ENCODE measurements at regions of chr5 and their contacts with region 1.

Region 1: GRCh38 chr5:134738133-134738962 is at the start of gene CAMLG:
- DNase-seq: peak; percentile 99
- H3K4me3 ChIP-seq: peak within 1 kb of the TSS; percentile 27 to 71 (median 67)
- H3K27ac ChIP-seq: peak within 1 kb of the TSS; percentile 64
- H3K4me1 ChIP-seq: peaks cover 9% of the 10 kb centered on the region
- H3K27me3 ChIP-seq: no peaks in the 10 kb centered on the region
- CTCF ChIP-seq: peak; percentile 65 to 73
- POLR2A ChIP-seq: peak; percentile 90
- total RNA-seq, gene CAMLG: 32.9 and 33.3 TPM in 2 replicates

Region 2: GRCh38 chr5:134365604-134366003 is 372.7 kb before region 1 on chr5:
- CTCF ChIA-PET with region 1: no interaction called
- POLR2A ChIA-PET with region 1: no interaction called
- dilution Hi-C with region 1: no loop called
- intact Hi-C with region 1: loop called (anchors 5 kb)
- DNase-seq: no peak
- H3K4me3 ChIP-seq: no peak overlapping the region
- H3K27ac ChIP-seq: no peak overlapping the region
- H3K4me1 ChIP-seq: peaks cover 8% of the 10 kb centered on the region
- H3K27me3 ChIP-seq: no peaks in the 10 kb centered on the region
- CTCF ChIP-seq: no peak
- POLR2A ChIP-seq: no peak

Region 3: DNA sequence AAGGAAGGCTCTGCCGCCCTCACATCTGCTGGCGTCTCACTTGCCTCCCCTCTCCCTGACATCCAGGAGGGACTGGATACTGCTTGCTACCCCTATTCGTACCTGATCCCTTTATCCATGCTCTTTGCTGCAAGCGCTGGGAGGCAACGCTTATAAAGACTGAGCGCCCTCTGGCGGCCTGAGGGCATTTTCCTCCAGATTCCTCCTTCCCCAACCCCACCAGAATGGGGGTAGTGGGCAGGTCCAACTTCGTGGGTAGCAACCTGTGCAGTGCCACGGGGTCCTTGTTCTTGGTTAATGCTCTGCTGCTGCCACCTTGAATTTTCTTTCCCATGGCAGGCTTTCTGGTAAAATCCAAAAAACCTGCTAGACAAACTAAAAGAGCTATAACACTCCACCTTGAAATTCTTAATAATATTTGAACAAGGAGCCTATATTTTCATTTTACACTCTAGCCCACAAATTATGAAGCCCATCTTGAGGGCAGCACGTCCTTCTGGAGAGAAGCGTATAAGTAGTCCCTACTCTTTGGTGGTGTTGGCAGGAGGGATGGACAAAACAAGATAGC is 160.5 kb before region 1 on chr5:
- CTCF ChIA-PET with region 1: no interaction called
- POLR2A ChIA-PET with region 1: no interaction called
- dilution Hi-C with region 1: no loop called
- intact Hi-C with region 1: no loop called
- DNase-seq: peak; percentile 80
- H3K4me3 ChIP-seq: no peak overlapping the region
- H3K27ac ChIP-seq: peak overlapping the region; percentile 67
- H3K4me1 ChIP-seq: peaks cover 37% of the 10 kb centered on the region
- H3K27me3 ChIP-seq: no peaks in the 10 kb centered on the region
- CTCF ChIP-seq: peak; percentile 83 to 88
- POLR2A ChIP-seq: no peak

Region 4: GRCh38 chr5:134758504-134759341 is 20.4 kb after region 1 on chr5 and contains the start of gene DDX46:
- CTCF ChIA-PET with region 1: interaction called, 37 read pairs
- POLR2A ChIA-PET with region 1: interaction called, 10 read pairs
- dilution Hi-C with region 1: no loop called
- intact Hi-C with region 1: loop called (anchors 1 kb)
- DNase-seq: peak; percentile 95
- H3K4me3 ChIP-seq: peak within 1 kb of the TSS; percentile 54 to 87 (median 76)
- H3K27ac ChIP-seq: peak within 1 kb of the TSS; percentile 45
- H3K4me1 ChIP-seq: peaks cover 15% of the 10 kb centered on the region
- H3K27me3 ChIP-seq: no peaks in the 10 kb centered on the region
- CTCF ChIP-seq: peak; percentile 84 to 89
- POLR2A ChIP-seq: peak; percentile 94
- total RNA-seq, gene DDX46: 58.0 and 65.2 TPM in 2 replicates

Region 5: GRCh38 chr5:134873987-134874830 is 135.9 kb after region 1 on chr5 and contains the start of gene TXNDC15:
- CTCF ChIA-PET with region 1: no interaction called
- POLR2A ChIA-PET with region 1: no interaction called
- dilution Hi-C with region 1: no loop called
- intact Hi-C with region 1: loop called (anchors 1 kb)
- DNase-seq: peak; percentile 89
- H3K4me3 ChIP-seq: peak within 1 kb of the TSS; percentile 54 to 95 (median 80)
- H3K27ac ChIP-seq: peak within 1 kb of the TSS; percentile 60
- H3K4me1 ChIP-seq: peaks cover 3% of the 10 kb centered on the region
- H3K27me3 ChIP-seq: no peaks in the 10 kb centered on the region
- CTCF ChIP-seq: no peak
- POLR2A ChIP-seq: peak; percentile 89
- total RNA-seq, gene TXNDC15: 49.7 and 68.6 TPM in 2 replicates

Region 6: DNA sequence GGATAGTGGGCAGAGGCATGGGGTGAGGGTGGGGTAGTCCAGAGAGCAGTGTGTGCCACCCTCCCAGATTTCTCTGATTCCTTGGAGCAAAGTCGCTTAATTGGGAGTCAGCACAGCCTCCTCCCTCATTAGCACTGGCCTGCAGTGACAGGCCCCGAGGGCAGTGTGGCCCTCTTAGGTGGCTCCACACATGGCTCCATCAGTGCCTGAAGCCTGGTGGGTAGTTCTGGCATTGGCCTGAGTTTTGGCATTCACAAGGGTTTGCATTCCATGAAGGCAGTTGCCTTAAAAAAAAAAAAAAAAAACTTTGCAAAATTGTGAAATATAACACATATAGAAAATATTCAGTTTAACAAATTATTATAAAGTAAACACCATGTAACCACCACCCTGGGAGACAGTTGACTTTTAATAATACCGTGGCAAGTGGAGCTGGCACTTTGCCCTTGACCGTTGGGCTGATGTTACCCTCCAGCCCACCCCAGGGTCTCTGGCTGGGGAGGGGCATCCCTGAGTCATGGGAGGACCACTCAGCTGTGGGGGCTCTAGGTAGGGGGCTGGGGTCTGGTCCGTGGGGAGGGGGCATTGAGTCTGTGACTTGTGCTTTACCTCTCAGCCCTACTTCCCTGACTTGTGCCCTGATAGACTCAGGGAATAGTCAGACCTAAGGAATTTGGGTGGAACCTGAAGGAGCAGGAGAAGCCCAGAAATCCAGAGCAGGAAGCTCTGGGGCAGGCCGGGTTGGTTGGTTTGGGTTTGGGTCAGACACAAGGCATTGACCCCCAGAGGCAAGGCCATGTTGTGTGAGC is 347.0 kb after region 1 on chr5:
- CTCF ChIA-PET with region 1: no interaction called
- POLR2A ChIA-PET with region 1: no interaction called
- dilution Hi-C with region 1: no loop called
- intact Hi-C with region 1: no loop called
- DNase-seq: no peak
- H3K4me3 ChIP-seq: no peak overlapping the region
- H3K27ac ChIP-seq: no peak overlapping the region
- H3K4me1 ChIP-seq: no peaks in the 10 kb centered on the region
- H3K27me3 ChIP-seq: peaks cover 1 to 4% of the 10 kb centered on the region in 2 experiments
- CTCF ChIP-seq: no peak
- POLR2A ChIP-seq: no peak

Region 7: GRCh38 chr5:135203593-135204036 is 465.3 kb after region 1 on chr5:
- CTCF ChIA-PET with region 1: no interaction called
- POLR2A ChIA-PET with region 1: no interaction called
- dilution Hi-C with region 1: no loop called
- intact Hi-C with region 1: loop called (anchors 5 kb)
- DNase-seq: no peak
- H3K4me3 ChIP-seq: no peak overlapping the region
- H3K27ac ChIP-seq: no peak overlapping the region
- H3K4me1 ChIP-seq: peaks cover 25% of the 10 kb centered on the region
- H3K27me3 ChIP-seq: peaks cover 0 to 3% of the 10 kb centered on the region in 2 experiments
- CTCF ChIP-seq: peak in 1 of 2 donors; percentile 19
- POLR2A ChIP-seq: no peak